ENCODE measurements at regions of chr11 and their contacts with region 1.

Region 1: DNA sequence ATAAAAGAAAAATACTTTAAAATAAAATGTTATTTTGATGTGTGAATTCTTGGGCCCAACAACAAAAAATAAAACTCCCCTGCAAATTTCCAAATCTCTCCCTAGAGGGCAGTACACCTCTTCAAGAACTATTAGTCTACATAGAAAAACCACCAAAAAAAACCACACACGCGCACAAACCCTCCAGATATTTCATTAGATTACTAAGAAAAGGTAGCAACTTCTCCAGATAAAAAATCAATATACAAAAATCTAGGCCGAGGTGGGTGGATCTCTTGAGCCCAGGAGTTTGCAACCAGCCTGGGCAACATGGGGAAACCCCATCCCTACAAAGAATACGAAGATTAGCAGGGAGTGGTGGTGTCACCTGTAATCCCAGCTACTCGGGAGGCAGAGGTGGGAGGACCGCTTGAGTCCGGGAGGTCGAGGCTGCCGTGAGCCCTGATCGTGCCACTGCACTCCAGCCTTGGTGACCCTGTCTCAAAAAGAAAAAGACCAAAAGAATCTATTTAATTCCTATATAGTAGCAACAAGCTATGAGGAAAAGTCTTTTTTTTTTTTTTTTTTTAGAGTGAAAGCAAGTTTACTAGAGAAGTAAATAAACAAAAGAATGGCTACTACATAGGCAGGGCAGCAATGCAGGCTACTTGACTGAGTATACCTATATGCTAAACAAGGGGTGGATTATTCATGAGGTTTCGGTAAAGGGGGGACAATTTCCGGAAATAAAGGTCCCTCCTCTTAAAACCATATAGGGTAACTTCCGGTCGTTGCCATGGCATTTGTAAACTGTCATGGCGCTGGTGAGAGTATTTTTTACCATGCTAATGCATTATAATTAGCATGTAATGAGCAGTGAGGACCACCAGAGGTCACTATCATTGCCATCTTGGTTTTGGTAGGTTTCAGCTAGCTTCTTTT is 13.1 kb downstream of the B3GNT6 start:
- DNase-seq: peak; percentile 92
- H3K4me3 ChIP-seq: peak overlapping the region; percentile 44
- H3K27me3 ChIP-seq: peaks cover 2% of the 10 kb centered on the region; the same call in 1 of the 2 replicates
- CTCF ChIP-seq: peak; percentile 65

Region 2: GRCh38 chr11:77027270-77027669 is 20.0 kb before region 1 on chr11:
- CTCF ChIA-PET with region 1: interaction called, 3 read pairs
- POLR2A ChIA-PET with region 1: interaction called, 11 read pairs
- DNase-seq: peak; percentile 46
- H3K4me3 ChIP-seq: no peak overlapping the region
- H3K27me3 ChIP-seq: peaks cover 2% of the 10 kb centered on the region; the same call in 1 of the 2 replicates
- CTCF ChIP-seq: no peak

Region 3: DNA sequence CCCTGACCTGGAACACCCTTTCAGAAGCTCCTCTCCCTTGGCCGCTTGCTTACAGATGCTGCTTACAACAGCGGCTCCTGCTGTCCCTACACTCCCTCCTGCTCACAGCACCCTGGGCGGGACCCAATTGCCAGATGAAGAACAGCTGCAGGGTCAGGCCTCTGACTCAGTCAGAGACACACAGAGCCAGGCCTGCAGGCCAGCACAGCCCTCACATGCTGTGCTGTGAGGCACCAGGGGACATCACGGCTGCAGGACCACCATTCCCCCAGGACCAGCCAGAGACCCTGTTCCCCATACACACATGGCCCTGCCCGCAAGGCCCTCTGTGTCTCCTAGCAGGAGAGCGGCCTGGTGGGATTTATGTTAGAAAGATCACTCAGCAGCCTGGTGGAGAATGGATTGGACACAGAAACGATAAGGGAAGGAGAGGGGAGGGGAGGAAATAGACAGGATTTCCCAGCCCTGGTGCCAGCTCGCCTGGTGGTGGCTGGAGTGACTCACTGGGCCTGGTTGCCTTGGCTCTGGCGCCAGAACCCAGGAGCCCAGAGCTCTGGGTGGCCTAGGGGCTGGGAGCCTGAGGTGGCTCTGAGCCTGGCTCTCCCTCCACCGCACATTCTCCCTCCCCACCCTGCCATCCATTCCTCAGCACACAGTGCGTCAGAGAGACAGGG is 26.2 kb after region 1 on chr11:
- CTCF ChIA-PET with region 1: interaction called, 14 read pairs
- POLR2A ChIA-PET with region 1: no interaction called
- DNase-seq: peak; percentile 80
- H3K4me3 ChIP-seq: no peak overlapping the region
- H3K27me3 ChIP-seq: no peaks in the 10 kb centered on the region
- CTCF ChIP-seq: peak; percentile 86

Region 4: DNA sequence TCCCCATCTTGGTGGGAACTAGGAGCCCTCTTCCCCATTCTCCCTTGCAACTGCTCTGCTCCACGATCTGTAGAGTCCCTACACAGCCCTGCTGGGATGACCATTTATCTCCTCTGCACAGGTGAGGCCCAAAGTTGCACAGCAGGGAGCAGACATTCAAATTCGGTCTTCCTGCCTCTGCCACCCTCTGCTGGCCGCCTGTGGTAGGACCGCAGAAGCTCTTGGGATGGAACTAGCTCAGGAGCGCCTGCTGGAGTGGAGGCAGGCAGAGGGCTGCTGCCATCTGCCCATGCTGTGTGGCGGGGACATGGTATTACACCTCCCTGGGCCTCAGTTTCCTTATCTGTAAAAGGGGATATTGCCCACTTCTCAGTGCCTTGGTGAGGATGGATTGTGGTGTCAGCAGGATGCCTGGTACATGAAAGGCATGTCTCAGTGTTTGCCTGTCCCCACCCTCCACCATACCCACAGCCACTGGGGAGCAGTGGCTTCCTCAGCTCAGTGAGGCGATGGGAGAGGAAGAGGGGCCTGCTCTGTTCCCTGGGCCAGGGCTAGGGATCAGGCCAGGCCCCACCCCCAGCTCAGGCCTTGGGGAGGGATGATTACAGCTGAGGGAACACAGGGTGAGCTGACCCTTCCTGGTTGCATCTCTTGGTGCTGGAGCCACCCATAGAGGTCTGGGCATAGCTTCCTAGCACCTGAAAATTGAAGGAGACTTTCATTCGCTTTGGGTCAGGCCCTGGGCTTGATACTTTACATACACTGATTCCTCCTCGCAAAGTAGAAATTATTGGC is 44.1 kb after region 1 on chr11:
- CTCF ChIA-PET with region 1: interaction called, 134 read pairs
- POLR2A ChIA-PET with region 1: interaction called, 9 read pairs
- DNase-seq: no peak
- H3K4me3 ChIP-seq: no peak overlapping the region
- H3K27me3 ChIP-seq: no peaks in the 10 kb centered on the region
- CTCF ChIP-seq: peak; percentile 93

Region 5: GRCh38 chr11:77113382-77114088 is 66.3 kb after region 1 on chr11:
- CTCF ChIA-PET with region 1: interaction called, 36 read pairs
- POLR2A ChIA-PET with region 1: no interaction called
- DNase-seq: no peak
- H3K4me3 ChIP-seq: no peak overlapping the region
- H3K27me3 ChIP-seq: no peaks in the 10 kb centered on the region
- CTCF ChIP-seq: peak; percentile 74

Measured in BJ (cell line).